ENCODE measurements at regions of chr1 and their contacts with region 1.

Region 1: DNA sequence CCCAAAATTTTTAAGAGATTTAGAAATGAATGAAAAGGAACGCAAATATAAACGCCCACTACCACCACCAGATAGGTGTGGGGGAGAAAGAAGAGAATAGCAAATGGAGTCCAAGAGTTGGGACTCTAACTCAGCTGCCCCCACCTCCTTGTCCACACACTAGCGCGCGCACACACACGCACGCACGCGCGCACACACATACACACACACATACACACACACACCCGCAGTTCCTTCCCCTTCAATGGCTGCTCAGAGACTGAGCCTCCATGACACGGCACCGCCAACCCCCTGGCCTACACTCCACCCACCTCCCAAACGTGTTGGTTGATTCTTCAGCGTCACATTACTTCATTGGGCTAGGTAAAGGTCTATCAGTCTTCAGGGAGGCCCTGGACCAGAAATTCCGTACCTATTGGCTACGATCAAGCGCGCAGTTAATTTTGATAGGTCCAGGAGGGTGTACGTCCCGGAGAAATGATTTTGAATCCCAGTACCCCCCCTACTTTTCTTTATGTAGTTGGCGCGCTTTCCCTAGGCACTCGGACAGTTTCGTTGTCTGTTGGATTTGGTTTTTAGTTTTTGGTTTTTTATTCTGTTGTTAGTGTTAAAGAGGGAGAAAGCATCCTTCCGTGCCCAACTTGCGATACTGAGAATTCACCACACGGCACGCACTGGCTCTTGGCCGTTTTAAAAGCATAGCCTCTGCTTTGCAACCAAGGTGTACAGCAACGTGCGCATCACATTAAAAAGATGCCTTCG is at the start of gene ANP32E:
- DNase-seq: peak; percentile 98
- CTCF ChIP-seq: no peak

Region 2: DNA sequence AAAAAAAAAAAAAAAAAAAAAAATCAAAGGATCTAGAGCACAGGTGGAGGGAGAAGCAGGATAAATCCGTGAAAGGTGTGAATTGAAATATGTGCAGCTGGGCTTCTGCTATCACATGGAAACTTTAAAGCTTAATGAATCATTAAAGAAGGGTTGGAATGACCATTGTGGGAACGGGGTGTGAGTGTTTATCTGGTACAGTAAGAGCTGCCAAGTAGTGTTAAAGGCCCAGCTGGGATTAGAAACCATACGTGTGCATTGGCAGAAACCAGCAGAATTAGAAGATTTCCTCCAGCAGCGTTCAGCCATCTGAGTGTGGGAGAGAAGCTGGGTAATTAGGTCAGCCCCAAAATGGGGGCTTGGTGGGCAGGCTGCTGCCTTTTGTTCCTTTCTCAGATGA is 293.0 kb after region 1 on chr1:
- in situ Hi-C with region 1: no loop called
- DNase-seq: no peak
- CTCF ChIP-seq: no peak

Region 3: GRCh38 chr1:150974580-150975478 is 738.8 kb after region 1 on chr1 and contains the start of gene CERS2:
- in situ Hi-C with region 1: loop called (anchors 25 kb)
- DNase-seq: peak; percentile 90
- CTCF ChIP-seq: no peak